Posterior cingulate gyrus (tissue), 11 donors: ENCODE measurements at regions of chr17 and their contacts with region 1.

Region 1: DNA sequence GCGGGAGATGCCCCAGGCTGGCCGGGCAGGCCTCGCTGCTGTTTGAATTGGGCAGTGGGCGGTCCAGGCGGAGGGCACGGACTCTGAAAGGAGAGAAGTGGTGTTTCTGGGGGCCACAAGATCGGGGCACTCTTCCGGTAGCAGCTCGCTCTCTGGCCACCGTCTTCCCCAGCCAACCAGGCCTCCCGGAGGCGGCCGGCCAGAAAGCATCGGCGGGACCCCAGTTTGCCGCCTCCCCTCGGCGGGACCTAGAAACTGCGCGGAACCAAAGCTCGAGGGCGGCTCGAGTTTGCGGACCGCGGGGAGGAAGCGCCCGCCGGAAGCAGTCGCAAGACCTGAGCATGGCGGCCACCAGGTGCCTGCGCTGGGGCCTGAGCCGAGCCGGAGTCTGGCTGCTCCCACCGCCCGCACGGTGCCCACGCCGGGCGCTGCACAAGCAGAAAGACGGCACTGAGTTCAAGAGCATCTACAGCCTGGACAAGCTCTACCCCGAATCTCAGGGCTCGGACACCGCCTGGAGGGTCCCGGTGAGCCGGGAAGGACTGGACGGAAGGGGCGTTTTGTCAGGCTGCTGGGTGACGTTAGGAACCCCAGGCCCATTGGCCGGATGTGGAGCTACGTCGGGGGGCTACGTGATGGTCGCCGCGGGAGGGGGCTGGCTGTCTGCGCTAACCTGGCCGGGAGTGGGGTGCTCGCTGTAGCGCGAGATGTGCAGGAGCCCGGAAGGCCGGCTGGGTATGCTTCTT is at the start of gene MRPL58:
- DNase-seq: peak; percentile 75 to 98 (median 86)

Region 2: DNA sequence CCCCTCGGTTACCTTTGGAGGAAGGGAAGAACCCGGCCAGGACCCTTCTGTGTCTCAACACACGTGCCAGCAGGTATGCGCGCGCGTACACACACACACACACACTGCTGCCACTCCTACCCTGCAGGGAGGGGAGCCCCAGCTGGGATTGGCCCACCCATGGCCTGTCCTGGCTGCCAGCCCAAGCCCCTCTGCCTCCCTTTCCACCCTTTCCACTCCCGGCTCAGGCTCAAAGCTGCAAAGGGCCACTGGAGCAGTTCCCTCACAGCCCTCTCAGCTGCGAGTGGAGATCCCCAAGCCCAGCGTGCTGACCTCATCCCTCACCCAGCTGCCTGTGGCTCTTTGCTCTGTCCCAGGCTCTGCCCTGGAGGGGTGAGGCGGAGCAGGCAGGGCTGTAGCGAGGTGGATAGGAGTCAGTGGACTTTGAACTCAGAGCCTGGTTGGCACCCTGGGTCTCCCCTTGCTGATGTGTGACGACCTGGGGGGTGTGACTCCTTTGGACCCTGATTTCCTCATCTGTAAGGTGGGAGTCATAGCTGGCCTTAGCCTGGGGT is 672.0 kb before region 1 on chr17:
- intact Hi-C with region 1: no loop called
- DNase-seq: peak in 7 of 10 donors; percentile 44 to 95 (median 69)

Region 3: GRCh38 chr17:74961657-74962490 is 50.6 kb before region 1 on chr17:
- intact Hi-C with region 1: loop called (anchors 2 kb)
- DNase-seq: peak; percentile 78 to 98 (median 90)

Region 4: DNA sequence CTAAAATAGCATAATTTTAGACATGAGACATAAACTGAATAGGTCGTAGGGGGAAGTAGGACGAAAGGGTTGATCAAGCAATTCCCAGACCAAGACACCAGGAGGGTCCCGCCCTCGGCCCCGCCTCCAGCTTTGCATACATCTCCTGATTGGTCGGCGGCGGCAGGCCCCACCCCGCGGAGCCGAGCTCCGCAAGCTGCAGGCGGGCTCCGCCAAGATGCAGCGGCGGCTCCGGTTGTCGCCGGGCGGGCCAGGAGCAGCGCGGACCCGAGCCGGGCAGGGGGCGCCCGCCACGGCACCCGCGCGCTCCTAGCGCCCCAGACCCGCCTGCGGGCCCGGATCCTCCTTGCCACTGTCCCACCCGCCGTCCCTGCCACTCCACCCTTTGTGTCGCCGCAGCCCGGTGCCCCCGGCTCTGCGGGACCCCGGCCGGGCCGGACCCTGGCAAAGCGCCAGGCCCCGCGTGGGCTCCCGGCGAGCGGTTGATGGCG is 25.1 kb before region 1 on chr17 and contains the start of gene CDR2L:
- intact Hi-C with region 1: loop called (anchors 2 kb)
- DNase-seq: peak; percentile 95 to 100 (median 98)

Region 5: GRCh38 chr17:75034236-75034908 is 21.9 kb after region 1 on chr17:
- intact Hi-C with region 1: loop called (anchors 1 kb)
- DNase-seq: peak; percentile 75 to 97 (median 86)